ENCODE measurements at regions of chr21 and their contacts with region 1.

Region 1: DNA sequence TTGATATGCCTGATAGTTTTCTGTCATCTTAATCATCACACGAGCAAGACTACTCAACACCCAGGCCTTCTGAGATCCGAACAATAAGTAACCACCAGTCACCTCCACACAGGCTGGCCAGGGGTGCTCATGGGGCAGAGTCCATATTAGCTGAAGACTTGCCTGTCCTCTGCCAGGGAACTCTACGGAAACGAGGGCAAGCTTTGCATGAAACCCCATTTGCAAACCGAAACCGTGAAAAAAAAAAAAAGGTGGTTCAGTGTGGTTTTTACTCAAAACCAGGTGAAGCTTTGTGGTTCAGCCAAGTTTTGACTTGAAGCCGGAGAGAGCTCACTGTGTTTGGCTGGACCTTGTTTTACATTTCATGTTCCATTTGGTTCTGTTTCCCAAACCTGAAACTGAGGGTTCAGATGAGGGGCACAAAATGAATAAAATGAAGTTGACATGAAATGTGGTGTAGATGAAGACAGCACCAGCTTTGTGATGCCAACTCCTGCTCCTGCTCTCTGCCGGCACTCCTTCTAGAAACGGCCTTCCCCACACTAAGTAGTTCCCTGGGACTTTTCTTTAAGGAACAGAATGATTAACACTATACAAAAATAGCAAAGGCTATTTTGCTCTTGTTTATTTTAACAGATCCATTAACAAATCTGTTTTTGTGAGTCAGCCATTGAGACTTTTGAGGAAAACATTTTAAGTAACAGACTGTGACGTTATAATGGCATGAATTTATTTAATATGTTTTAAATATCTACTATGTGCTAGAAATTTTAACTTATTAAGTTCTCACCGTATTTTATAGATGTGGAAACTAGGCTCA is 74.7 kb downstream of the RUNX1 start:
- DNase-seq: peak in 8 of 9 experiments; percentile 30 to 86 (median 54)
- ATAC-seq: peak; percentile 84
- H3K4me3 ChIP-seq: peak overlapping the region; percentile 19 to 22
- H3K4me3 Mint-ChIP-seq: peak overlapping the region; percentile 78
- H3K27ac ChIP-seq: peak overlapping the region; percentile 8 to 36
- H3K27ac Mint-ChIP-seq: peak overlapping the region; percentile 89
- H3K4me1 ChIP-seq: peaks cover 59% of the 10 kb centered on the region
- H3K4me1 Mint-ChIP-seq: peaks cover 85% of the 10 kb centered on the region
- H3K27me3 ChIP-seq: no peaks in the 10 kb centered on the region
- H3K27me3 Mint-ChIP-seq: no peaks in the 10 kb centered on the region
- CTCF ChIP-seq: no peak

Region 2: GRCh38 chr21:34986561-34987500 is 12.5 kb after region 1 on chr21:
- CTCF ChIA-PET with region 1: interaction called, 4 read pairs
- POLR2A ChIA-PET with region 1: interaction called, 16 read pairs
- intact Hi-C with region 1: loop called in 1 of 2 experiments (anchors 1 kb)
- DNase-seq: peak; percentile 19 to 81 (median 68)
- ATAC-seq: peak; percentile 72
- H3K4me3 ChIP-seq: peak overlapping the region; percentile 3 to 7
- H3K4me3 Mint-ChIP-seq: peak overlapping the region; percentile 63
- H3K27ac ChIP-seq: peak overlapping the region; percentile 15 to 71
- H3K27ac Mint-ChIP-seq: peak overlapping the region; percentile 95
- H3K4me1 ChIP-seq: peaks cover 89% of the 10 kb centered on the region
- H3K4me1 Mint-ChIP-seq: peaks cover 93% of the 10 kb centered on the region
- H3K27me3 ChIP-seq: no peaks in the 10 kb centered on the region
- H3K27me3 Mint-ChIP-seq: no peaks in the 10 kb centered on the region
- CTCF ChIP-seq: no peak

Region 3: DNA sequence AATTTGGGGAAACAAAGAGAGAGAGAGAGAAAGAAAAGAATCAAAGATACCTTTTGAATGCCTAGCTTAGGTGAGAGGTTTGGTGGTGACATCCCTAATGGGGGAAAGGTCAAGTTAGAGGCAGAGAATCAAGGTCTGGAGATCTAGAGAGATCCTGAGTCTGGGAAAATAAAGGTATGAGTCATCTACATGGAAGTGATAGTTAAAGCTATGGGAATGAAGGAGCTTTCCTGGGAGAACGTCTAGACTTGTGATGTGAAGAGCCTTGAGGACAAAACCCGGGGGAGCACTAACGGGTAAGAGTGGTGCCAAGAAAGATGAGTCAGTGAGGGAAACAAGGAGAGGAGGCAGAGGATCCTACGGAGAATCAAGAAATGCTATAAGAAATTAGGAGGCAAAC is 185.5 kb after region 1 on chr21:
- CTCF ChIA-PET with region 1: no interaction called
- POLR2A ChIA-PET with region 1: no interaction called
- intact Hi-C with region 1: no loop called
- DNase-seq: no peak
- ATAC-seq: no peak
- H3K4me3 ChIP-seq: no peak overlapping the region
- H3K4me3 Mint-ChIP-seq: no peak overlapping the region
- H3K27ac ChIP-seq: no peak overlapping the region
- H3K27ac Mint-ChIP-seq: no peak overlapping the region
- H3K4me1 ChIP-seq: no peaks in the 10 kb centered on the region
- H3K4me1 Mint-ChIP-seq: no peaks in the 10 kb centered on the region
- H3K27me3 ChIP-seq: no peaks in the 10 kb centered on the region
- H3K27me3 Mint-ChIP-seq: no peaks in the 10 kb centered on the region
- CTCF ChIP-seq: no peak

Region 4: DNA sequence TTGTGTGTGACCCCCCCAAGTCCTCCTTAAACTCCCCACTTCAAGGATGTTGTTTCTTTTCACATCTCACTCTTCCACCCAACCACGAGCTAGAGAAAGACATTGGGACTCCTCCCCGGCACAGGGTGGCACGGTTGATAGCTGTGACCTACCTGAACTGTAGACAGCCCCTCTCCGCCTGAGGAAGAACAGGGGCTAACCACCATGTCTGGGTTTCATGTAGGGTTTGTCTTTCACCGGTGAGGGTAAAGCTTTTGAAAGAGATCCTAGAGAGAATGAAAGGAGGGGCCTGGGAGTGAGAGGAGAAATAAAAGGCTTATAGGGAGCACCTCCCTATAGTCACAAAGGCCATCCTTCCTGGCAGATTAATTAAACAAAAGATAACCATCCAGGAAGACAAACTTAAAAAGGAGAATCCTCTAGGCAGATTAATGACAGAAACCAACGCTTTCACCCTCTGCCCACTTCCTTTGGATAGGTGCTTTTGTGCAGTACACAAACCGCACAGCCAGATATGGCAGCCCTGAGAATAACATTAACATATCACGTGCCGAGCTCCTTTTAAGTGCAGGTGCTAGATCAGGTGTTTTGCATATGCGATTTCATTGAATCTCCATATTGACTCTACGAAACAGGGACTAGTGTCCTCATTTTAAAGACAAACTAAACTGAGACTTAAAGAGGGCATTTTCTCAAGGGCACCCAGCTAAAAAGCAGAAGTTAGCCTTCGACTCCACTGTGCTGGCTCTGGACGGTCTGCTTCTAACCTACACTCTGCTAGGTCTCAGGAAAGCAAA is 252.8 kb after region 1 on chr21:
- CTCF ChIA-PET with region 1: no interaction called
- POLR2A ChIA-PET with region 1: interaction called, 3 read pairs
- intact Hi-C with region 1: loop called in 1 of 2 experiments (anchors 10 kb)
- DNase-seq: peak; percentile 18 to 84 (median 41)
- ATAC-seq: peak; percentile 87
- H3K4me3 ChIP-seq: peak overlapping the region; percentile 2 to 16
- H3K4me3 Mint-ChIP-seq: peak overlapping the region; percentile 67
- H3K27ac ChIP-seq: peak overlapping the region; percentile 48 to 71
- H3K27ac Mint-ChIP-seq: peak overlapping the region; percentile 95
- H3K4me1 ChIP-seq: peaks cover 38% of the 10 kb centered on the region
- H3K4me1 Mint-ChIP-seq: peaks cover 41% of the 10 kb centered on the region
- H3K27me3 ChIP-seq: no peaks in the 10 kb centered on the region
- H3K27me3 Mint-ChIP-seq: no peaks in the 10 kb centered on the region
- CTCF ChIP-seq: no peak

Region 5: GRCh38 chr21:35284199-35284598 is 309.8 kb after region 1 on chr21:
- CTCF ChIA-PET with region 1: no interaction called
- POLR2A ChIA-PET with region 1: no interaction called
- intact Hi-C with region 1: no loop called
- DNase-seq: no peak
- ATAC-seq: no peak
- H3K4me3 ChIP-seq: no peak overlapping the region
- H3K4me3 Mint-ChIP-seq: no peak overlapping the region
- H3K27ac ChIP-seq: no peak overlapping the region
- H3K27ac Mint-ChIP-seq: no peak overlapping the region
- H3K4me1 ChIP-seq: no peaks in the 10 kb centered on the region
- H3K4me1 Mint-ChIP-seq: no peaks in the 10 kb centered on the region
- H3K27me3 ChIP-seq: no peaks in the 10 kb centered on the region
- H3K27me3 Mint-ChIP-seq: no peaks in the 10 kb centered on the region
- CTCF ChIP-seq: no peak

Measured in CD8-positive, alpha-beta T cell (primary cell).